ENCODE measurements at regions of chr10 and their contacts with region 1.

Region 1: GRCh38 chr10:69092959-69093850 is 5.3 kb downstream of the SRGN start:
- DNase-seq: peak; percentile 97
- ATAC-seq: peak; percentile 66
- H3K4me3 ChIP-seq: no peak overlapping the region
- H3K27ac ChIP-seq: peak overlapping the region; percentile 9; the same call in 1 of the 2 replicates
- H3K4me1 ChIP-seq: peaks cover 43% of the 10 kb centered on the region
- H3K27me3 ChIP-seq: no peaks in the 10 kb centered on the region
- CTCF ChIP-seq: peak; percentile 97

Region 2: DNA sequence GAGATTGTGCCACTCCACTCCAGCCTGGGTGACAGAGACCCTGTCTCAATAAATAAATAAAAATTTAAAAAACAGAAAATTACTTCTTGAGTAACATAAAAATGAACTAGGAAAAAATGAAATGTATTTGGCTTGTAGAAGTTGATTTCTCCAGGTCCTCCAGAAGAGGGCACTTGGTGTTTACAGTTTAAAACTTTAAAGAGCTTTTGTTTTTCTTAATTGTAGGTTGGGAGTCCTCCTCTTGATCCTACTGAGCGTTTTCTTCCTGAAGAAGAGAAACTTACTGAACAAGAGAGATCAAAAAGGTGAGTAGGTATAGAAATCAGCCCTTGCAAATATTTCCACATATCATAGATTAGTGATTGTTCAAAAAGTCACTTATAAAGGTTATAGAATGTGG is 88.4 kb before region 1 on chr10:
- CTCF ChIA-PET with region 1: interaction called, 21 read pairs
- POLR2A ChIA-PET with region 1: no interaction called
- intact Hi-C with region 1: loop called (anchors 1 kb)
- DNase-seq: peak; percentile 80
- ATAC-seq: peak; percentile 66
- H3K4me3 ChIP-seq: no peak overlapping the region
- H3K27ac ChIP-seq: no peak overlapping the region
- H3K4me1 ChIP-seq: 0 out of 2 replicates have a peak, but pooled peaks cover 7% of the 10 kb centered on the region
- H3K27me3 ChIP-seq: no peaks in the 10 kb centered on the region
- CTCF ChIP-seq: peak; percentile 89

Region 3: DNA sequence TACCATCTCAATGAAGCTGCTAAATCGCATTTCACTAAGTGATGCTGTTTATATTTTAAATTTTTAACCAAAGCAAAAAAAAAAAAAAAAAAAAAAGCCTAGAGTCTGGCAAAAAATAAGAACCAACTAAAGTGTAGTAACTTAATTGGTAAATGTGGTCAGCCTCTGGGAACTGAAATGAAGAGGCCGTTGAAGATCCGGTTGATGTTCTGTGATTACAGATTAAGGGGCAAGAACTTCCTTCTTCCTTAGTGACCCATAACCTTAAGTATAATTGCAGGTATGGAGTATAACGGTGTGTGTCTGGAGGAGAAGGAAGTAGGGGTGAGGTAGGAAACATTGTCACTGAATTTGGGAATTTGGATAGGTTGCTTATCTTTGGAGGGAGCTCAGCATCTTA is 13.0 kb before region 1 on chr10:
- CTCF ChIA-PET with region 1: interaction called, 13 read pairs
- POLR2A ChIA-PET with region 1: no interaction called
- intact Hi-C with region 1: no loop called
- DNase-seq: no peak
- ATAC-seq: no peak
- H3K4me3 ChIP-seq: no peak overlapping the region
- H3K27ac ChIP-seq: no peak overlapping the region
- H3K4me1 ChIP-seq: no peaks in the 10 kb centered on the region
- H3K27me3 ChIP-seq: no peaks in the 10 kb centered on the region
- CTCF ChIP-seq: no peak

Region 4: DNA sequence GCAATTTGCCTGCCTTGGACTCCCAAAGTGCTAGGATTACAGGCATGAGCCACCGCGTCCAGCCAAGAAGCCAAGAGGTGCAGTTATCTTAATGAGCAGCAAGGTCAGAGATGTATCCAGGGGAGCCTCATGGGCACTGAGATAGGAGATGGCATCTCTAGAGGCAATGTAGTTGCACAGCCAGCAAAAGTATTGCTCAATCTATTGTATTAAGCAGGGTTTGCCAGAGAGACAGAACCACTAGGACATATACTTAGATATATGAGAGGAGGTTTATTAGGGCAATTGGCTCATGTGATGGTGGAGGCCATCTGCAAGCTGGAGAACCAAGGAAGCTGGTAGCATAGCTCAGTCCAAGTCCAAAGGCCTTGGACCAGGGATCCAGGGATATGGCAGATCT is 14.5 kb after region 1 on chr10:
- CTCF ChIA-PET with region 1: no interaction called
- POLR2A ChIA-PET with region 1: interaction called, 16 read pairs
- intact Hi-C with region 1: no loop called
- DNase-seq: no peak
- ATAC-seq: peak; percentile 29; the same call in 1 of the 2 replicates
- H3K4me3 ChIP-seq: no peak overlapping the region
- H3K27ac ChIP-seq: no peak overlapping the region
- H3K4me1 ChIP-seq: no peaks in the 10 kb centered on the region
- H3K27me3 ChIP-seq: no peaks in the 10 kb centered on the region
- CTCF ChIP-seq: no peak

Region 5: GRCh38 chr10:69123747-69124562 is 30.8 kb after region 1 on chr10 and contains the start of gene VPS26A:
- CTCF ChIA-PET with region 1: interaction called, 4 read pairs
- POLR2A ChIA-PET with region 1: interaction called, 3 read pairs
- intact Hi-C with region 1: loop called (anchors 1 kb)
- DNase-seq: peak; percentile 100
- ATAC-seq: peak; percentile 82
- H3K4me3 ChIP-seq: peak within 1 kb of the TSS; percentile 93
- H3K27ac ChIP-seq: peak within 1 kb of the TSS; percentile 56
- H3K4me1 ChIP-seq: peaks cover 23% of the 10 kb centered on the region
- H3K27me3 ChIP-seq: no peaks in the 10 kb centered on the region
- CTCF ChIP-seq: no peak
- total RNA-seq, gene VPS26A: 44.7 and 60.0 TPM in 2 replicates

Measured in PC-3 (cell line).